H1 (cell line): ENCODE measurements at regions of chr12 and their contacts with region 1.

Region 1: DNA sequence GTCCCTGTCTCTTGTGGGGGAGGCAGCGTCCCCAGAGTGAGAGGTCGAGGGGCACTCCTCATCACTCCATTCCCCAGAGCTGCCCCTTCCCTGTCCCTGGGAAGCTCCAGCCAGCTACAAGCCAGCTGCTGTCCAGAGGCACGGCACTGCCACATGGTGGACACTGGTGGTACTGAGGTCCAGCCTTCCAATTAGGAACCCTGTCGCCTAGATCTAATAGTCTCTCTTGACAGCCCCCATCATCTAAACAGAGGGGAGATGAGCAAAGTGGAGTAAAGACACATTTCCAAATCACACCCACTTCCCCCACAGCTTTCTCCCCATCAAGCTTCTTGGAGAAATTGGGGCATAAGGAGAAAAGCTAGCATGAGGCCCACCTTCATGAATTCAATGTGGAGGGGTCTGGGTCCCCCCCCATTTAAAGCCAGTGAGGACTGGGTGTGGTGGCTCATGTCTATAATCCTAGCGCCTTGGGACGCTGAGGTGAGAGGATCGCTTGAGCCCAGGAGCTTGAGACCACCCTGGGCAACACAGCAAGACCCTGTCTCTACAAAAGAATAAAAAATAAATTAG is 2.1 kb upstream of the INHBE start:
- DNase-seq: peak in 1 of 2 experiments; percentile 94
- H3K4me3 ChIP-seq: no peak overlapping the region
- H3K27ac ChIP-seq: no peak overlapping the region
- H3K4me1 ChIP-seq: peaks cover 0 to 28% (median 19%) of the 10 kb centered on the region in 4 experiments; a peak in 6 of 7 replicates
- H3K27me3 ChIP-seq: no peaks in the 10 kb centered on the region
- CTCF ChIP-seq: peak in 2 of 3 experiments; percentile 97 to 99; a peak in 3 of 4 replicates
- EP300 ChIP-seq: no peak
- POLR2A ChIP-seq: no peak
- RAD21 ChIP-seq: peak; percentile 98 to 99

Region 2: GRCh38 chr12:56998981-56999380 is 454.0 kb before region 1 on chr12:
- CTCF ChIA-PET with region 1: no interaction called
- POLR2A ChIA-PET with region 1: no interaction called
- DNase-seq: no peak
- H3K4me3 ChIP-seq: no peak overlapping the region
- H3K27ac ChIP-seq: no peak overlapping the region
- H3K4me1 ChIP-seq: no peaks in the 10 kb centered on the region
- H3K27me3 ChIP-seq: no peaks in the 10 kb centered on the region
- CTCF ChIP-seq: no peak
- EP300 ChIP-seq: no peak
- POLR2A ChIP-seq: no peak
- RAD21 ChIP-seq: no peak

Region 3: DNA sequence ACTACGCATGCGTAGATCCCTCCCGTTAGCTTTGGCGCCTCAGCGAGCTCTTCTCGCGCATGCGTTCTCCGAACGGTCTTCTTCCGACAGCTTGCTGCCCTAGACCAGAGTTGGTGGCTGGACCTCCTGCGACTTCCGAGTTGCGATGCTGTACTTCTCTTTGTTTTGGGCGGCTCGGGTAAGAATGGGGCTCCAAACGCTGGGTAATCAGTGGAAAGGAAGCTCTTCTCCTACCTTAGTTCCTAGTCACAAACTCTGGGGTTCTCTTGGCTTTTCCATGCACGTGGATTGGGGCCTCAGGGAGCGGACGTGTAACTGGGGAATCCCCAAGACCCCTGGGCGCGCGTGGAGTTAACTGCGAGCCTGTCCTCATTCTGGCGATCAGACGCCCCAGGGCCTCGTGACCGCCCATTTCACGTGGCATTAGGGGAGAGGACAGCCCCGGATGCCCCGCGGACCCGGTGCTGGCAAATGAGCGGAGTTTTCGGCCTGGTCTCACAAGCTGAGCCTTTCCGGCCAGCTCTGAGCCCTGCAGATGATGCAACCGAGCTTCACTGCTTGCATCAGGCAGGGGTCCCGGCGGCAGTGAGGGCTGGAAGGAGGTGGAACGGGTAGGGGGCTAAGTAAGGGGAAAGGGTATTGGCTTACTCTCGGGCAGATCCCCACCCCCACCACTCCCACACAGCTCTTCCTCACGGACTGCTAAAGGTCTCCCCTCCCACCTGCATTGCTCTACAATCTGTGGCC is 223.2 kb before region 1 on chr12 and contains the start of gene SHMT2:
- CTCF ChIA-PET with region 1: interaction called, 5 read pairs
- POLR2A ChIA-PET with region 1: interaction called, 51 read pairs
- DNase-seq: peak; percentile 91 to 94
- H3K4me3 ChIP-seq: peak within 1 kb of the TSS; percentile 69 to 93 (median 81)
- H3K27ac ChIP-seq: peak within 1 kb of the TSS; percentile 85
- H3K4me1 ChIP-seq: peaks cover 4 to 43% (median 21%) of the 10 kb centered on the region in 4 experiments
- H3K27me3 ChIP-seq: peaks cover 11 to 32% (median 26%) of the 10 kb centered on the region in 4 experiments
- CTCF ChIP-seq: no peak
- EP300 ChIP-seq: 0 out of 3 replicates have a peak, but pooled peaks of 1 of the 2 experiments have one; percentile 37
- POLR2A ChIP-seq: peak in 1 of 2 experiments; percentile 68; a peak in 2 of 3 replicates
- RAD21 ChIP-seq: no peak
- total RNA-seq, gene SHMT2: 274 and 283 TPM in 2 replicates

Region 4: GRCh38 chr12:57261428-57261865 is 191.6 kb before region 1 on chr12:
- CTCF ChIA-PET with region 1: interaction called, 37 read pairs
- POLR2A ChIA-PET with region 1: interaction called, 28 read pairs
- DNase-seq: no peak
- H3K4me3 ChIP-seq: no peak overlapping the region
- H3K27ac ChIP-seq: no peak overlapping the region
- H3K4me1 ChIP-seq: peaks cover 0 to 7% (median 3%) of the 10 kb centered on the region in 4 experiments; a peak in 5 of 7 replicates
- H3K27me3 ChIP-seq: no peaks in the 10 kb centered on the region
- CTCF ChIP-seq: no peak
- EP300 ChIP-seq: no peak
- POLR2A ChIP-seq: no peak
- RAD21 ChIP-seq: no peak

Region 5: DNA sequence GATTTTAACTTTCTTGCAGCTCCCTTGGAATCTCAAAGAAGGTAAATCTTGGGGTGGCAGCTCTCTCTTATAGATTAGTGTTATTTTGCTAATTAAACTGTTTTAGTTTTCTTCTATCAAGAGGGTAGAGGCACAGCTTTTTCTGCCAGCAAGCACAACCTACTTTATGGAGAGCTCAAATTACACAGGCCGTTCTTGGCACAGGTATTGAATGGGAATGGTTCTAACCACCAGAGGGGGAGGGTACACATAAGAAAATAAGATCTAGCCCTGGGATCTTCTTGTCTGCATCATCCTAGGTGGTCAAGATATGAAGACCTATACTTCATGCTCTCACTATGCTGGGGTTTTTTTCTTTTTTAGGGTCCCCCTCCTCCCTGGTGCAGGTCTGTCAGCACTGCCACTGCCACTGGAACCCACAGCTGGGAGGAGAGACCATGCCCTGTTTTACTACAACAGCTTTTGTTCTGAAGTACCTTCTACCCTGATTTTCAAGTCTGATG is 153.5 kb before region 1 on chr12:
- CTCF ChIA-PET with region 1: interaction called, 478 read pairs
- POLR2A ChIA-PET with region 1: interaction called, 25 read pairs
- DNase-seq: no peak
- H3K4me3 ChIP-seq: no peak overlapping the region
- H3K27ac ChIP-seq: no peak overlapping the region
- H3K4me1 ChIP-seq: peaks cover 0 to 9% (median 4%) of the 10 kb centered on the region in 4 experiments; a peak in 4 of 7 replicates
- H3K27me3 ChIP-seq: no peaks in the 10 kb centered on the region
- CTCF ChIP-seq: no peak
- EP300 ChIP-seq: no peak
- POLR2A ChIP-seq: no peak
- RAD21 ChIP-seq: no peak

Region 6: DNA sequence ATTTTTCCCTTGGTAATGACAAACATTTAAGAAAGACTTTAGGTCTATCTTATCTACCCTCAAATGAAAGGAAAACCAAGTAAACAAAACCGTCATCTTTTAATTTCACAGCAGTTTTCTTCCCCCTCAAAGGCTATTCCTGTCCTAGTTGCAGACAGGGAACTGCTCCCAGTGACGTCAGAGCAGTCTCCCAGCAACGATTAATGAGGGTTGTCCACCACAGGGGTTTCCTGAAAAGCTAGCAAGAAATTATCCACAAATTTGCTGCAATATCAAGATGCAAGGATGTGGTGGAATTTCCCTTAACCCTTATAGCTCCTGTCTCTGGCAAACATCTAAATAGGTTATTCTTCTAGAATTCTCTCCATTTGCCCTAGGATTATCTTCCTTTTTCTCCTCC is 112.9 kb before region 1 on chr12:
- CTCF ChIA-PET with region 1: interaction called, 12 read pairs
- POLR2A ChIA-PET with region 1: interaction called, 31 read pairs
- DNase-seq: no peak
- H3K4me3 ChIP-seq: no peak overlapping the region
- H3K27ac ChIP-seq: no peak overlapping the region
- H3K4me1 ChIP-seq: peaks cover 0 to 3% (median 1%) of the 10 kb centered on the region in 4 experiments; a peak in 2 of 7 replicates
- H3K27me3 ChIP-seq: no peaks in the 10 kb centered on the region
- CTCF ChIP-seq: no peak
- EP300 ChIP-seq: no peak
- POLR2A ChIP-seq: no peak
- RAD21 ChIP-seq: no peak

Region 7: DNA sequence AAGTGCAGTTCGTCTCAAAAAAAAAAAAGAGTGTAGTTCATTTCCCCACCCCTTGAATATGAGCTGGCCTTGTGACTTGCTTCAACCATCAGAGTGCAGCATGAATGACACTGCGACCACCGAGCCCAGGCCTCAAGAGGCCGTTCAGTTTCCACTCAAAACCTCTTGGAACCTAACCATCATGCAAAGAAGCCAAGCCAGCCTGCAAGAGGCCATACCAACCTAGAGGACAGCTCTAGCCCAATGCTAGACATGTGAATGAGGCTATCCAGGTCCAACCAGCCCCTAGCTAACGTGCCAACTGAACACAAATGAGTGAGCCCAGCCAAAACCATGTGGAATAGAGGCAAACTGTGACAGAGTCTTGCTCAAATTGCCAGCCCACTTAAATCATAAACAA is 51.9 kb before region 1 on chr12:
- CTCF ChIA-PET with region 1: interaction called, 19 read pairs
- POLR2A ChIA-PET with region 1: interaction called, 5 read pairs
- DNase-seq: peak in 1 of 2 experiments; percentile 39
- H3K4me3 ChIP-seq: no peak overlapping the region
- H3K27ac ChIP-seq: no peak overlapping the region
- H3K4me1 ChIP-seq: peaks cover 0 to 2% (median 0%) of the 10 kb centered on the region in 4 experiments; a peak in 1 of 7 replicates
- H3K27me3 ChIP-seq: no peaks in the 10 kb centered on the region
- CTCF ChIP-seq: no peak
- EP300 ChIP-seq: no peak
- POLR2A ChIP-seq: no peak
- RAD21 ChIP-seq: no peak

Region 8: GRCh38 chr12:57430931-57431720 is 21.9 kb before region 1 on chr12 and contains the start of gene R3HDM2:
- CTCF ChIA-PET with region 1: interaction called, 112 read pairs
- POLR2A ChIA-PET with region 1: interaction called, 168 read pairs
- DNase-seq: peak; percentile 90 to 99
- H3K4me3 ChIP-seq: peak within 1 kb of the TSS; percentile 55 to 73 (median 70)
- H3K27ac ChIP-seq: peak within 1 kb of the TSS; percentile 81; the same call in 1 of the 2 replicates
- H3K4me1 ChIP-seq: peaks cover 0 to 5% (median 2%) of the 10 kb centered on the region in 4 experiments; a peak in 5 of 7 replicates
- H3K27me3 ChIP-seq: no peaks in the 10 kb centered on the region
- CTCF ChIP-seq: no peak
- EP300 ChIP-seq: peak in 1 of 2 experiments; percentile 47; a peak in 1 of 3 replicates
- POLR2A ChIP-seq: peak in 1 of 2 experiments; percentile 87; a peak in 2 of 3 replicates
- RAD21 ChIP-seq: no peak
- total RNA-seq, gene R3HDM2: 23.7 and 27.0 TPM in 2 replicates

Region 9: GRCh38 chr12:57694459-57695019 is 241.5 kb after region 1 on chr12:
- CTCF ChIA-PET with region 1: no interaction called
- POLR2A ChIA-PET with region 1: no interaction called
- DNase-seq: no peak
- H3K4me3 ChIP-seq: peak overlapping the region; percentile 66 to 99 (median 91)
- H3K27ac ChIP-seq: peak overlapping the region; percentile 64; the same call in 1 of the 2 replicates
- H3K4me1 ChIP-seq: peaks cover 0 to 5% (median 1%) of the 10 kb centered on the region in 4 experiments; a peak in 1 of 7 replicates
- H3K27me3 ChIP-seq: no peaks in the 10 kb centered on the region
- CTCF ChIP-seq: no peak
- EP300 ChIP-seq: no peak
- POLR2A ChIP-seq: no peak
- RAD21 ChIP-seq: no peak